B cell (primary cell): ENCODE measurements at regions of chr1 and their contacts with region 1.

Region 1: GRCh38 chr1:157512036-157512969 is 40.0 kb downstream of the FCRL5 start:
- DNase-seq: peak; percentile 66
- ATAC-seq: peak; percentile 57
- H3K4me3 ChIP-seq: no peak overlapping the region
- H3K4me3 Mint-ChIP-seq: peak overlapping the region; percentile 52
- H3K27ac ChIP-seq: peak overlapping the region in 1 of 2 donors; percentile 10
- H3K27ac Mint-ChIP-seq: peak overlapping the region; percentile 70
- H3K4me1 ChIP-seq: peaks cover 41 to 50% of the 10 kb centered on the region in 2 donors
- H3K4me1 Mint-ChIP-seq: peaks cover 59% of the 10 kb centered on the region
- H3K27me3 ChIP-seq: no peaks in the 10 kb centered on the region
- H3K27me3 Mint-ChIP-seq: no peaks in the 10 kb centered on the region
- CTCF ChIP-seq: no peak

Region 2: GRCh38 chr1:157551694-157552637 is 39.7 kb after region 1 on chr1 and contains the start of gene FCRL5:
- CTCF ChIA-PET with region 1: no interaction called
- POLR2A ChIA-PET with region 1: no interaction called
- intact Hi-C with region 1: loop called (anchors 5 kb)
- DNase-seq: peak; percentile 69
- ATAC-seq: peak; percentile 82
- H3K4me3 ChIP-seq: peak within 1 kb of the TSS; percentile 49 to 85 (median 71)
- H3K4me3 Mint-ChIP-seq: peak within 1 kb of the TSS; percentile 91
- H3K27ac ChIP-seq: peak within 1 kb of the TSS; percentile 42 to 78
- H3K27ac Mint-ChIP-seq: peak within 1 kb of the TSS; percentile 89
- H3K4me1 ChIP-seq: peaks cover 27 to 29% of the 10 kb centered on the region in 2 donors
- H3K4me1 Mint-ChIP-seq: peaks cover 63% of the 10 kb centered on the region
- H3K27me3 ChIP-seq: no peaks in the 10 kb centered on the region
- H3K27me3 Mint-ChIP-seq: no peaks in the 10 kb centered on the region
- CTCF ChIP-seq: no peak
- total RNA-seq, gene FCRL5: 34.0 and 35.0 TPM in 2 replicates

Region 3: DNA sequence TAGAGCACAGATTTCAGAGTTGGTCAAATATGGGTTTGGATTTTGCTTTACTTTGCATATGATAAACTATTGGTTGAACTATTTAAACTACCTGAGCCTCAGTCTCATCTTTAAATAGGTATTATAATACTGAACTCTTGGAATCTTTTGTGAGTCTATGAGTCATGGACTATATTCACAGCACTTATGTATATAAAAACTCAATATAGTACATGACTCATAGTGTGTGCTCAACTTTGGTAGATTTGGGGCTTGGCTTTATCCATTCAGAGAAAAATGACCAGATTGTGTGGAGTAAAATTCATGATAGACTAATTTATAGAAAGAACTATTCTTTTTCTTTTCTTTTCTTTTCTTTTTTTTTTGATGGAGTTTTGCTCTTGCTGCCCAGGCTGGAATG is 159.6 kb after region 1 on chr1:
- CTCF ChIA-PET with region 1: no interaction called
- POLR2A ChIA-PET with region 1: no interaction called
- intact Hi-C with region 1: no loop called
- DNase-seq: no peak
- ATAC-seq: no peak
- H3K4me3 ChIP-seq: no peak overlapping the region
- H3K4me3 Mint-ChIP-seq: no peak overlapping the region
- H3K27ac ChIP-seq: no peak overlapping the region
- H3K27ac Mint-ChIP-seq: no peak overlapping the region
- H3K4me1 ChIP-seq: no peaks in the 10 kb centered on the region
- H3K4me1 Mint-ChIP-seq: no peaks in the 10 kb centered on the region
- H3K27me3 ChIP-seq: no peaks in the 10 kb centered on the region
- H3K27me3 Mint-ChIP-seq: no peaks in the 10 kb centered on the region
- CTCF ChIP-seq: no peak